Ovary (tissue), 10 donors: ENCODE measurements at regions of chr22 and their contacts with region 1.

Region 1: DNA sequence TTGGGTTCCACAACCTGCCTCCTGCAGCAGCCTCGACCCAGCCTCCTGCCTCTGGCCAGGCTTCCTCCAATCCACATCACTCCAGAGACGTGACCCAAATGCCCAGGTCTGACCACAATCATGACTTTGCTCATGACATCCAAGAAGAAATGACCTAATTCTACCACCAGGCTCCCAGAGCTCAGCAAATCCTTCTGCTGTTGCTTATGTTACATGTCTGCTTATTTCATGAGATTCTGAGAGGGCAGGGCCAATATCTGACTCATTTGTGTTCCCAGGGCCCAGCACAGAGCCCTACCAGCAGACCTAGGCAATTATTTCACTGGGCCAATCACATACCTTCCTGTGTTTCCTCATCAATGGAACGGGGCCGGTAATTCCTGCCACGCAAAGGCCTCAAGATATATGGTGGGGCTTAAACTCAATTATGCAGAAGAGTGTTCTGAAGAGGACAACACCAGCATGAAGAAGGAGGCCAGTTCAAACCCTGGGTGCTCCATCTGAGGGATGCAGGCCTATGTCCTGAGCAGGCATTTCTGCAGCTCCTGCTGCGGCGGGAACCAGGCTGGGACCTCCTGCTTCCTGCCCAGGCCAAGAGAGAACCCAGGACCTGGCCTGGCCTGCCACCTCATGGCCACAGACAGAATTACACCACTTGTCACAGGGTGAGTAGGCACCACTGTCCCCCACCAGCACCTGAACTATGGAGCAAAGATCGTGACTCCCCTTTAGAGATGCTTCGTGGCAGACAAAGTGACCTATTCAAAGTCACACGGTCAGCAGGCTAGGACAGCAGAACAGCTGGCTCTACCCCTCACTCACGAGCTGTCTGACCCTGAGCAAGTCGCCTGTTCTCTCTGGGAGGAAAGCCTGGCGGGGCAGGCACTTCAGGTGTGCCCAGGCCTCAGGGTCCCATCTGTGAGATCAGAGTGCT is 5.9 kb downstream of the CENPM start:
- DNase-seq: peak; percentile 78 to 89 (median 87)
- H3K4me3 ChIP-seq: no peak overlapping the region
- H3K27ac ChIP-seq: no peak overlapping the region
- H3K4me1 ChIP-seq: peaks cover 3% of the 10 kb centered on the region
- H3K27me3 ChIP-seq: no peaks in the 10 kb centered on the region
- CTCF ChIP-seq: peak; percentile 77 to 95 (median 92)
- EP300 ChIP-seq: no peak
- POLR2A ChIP-seq: no peak

Region 2: DNA sequence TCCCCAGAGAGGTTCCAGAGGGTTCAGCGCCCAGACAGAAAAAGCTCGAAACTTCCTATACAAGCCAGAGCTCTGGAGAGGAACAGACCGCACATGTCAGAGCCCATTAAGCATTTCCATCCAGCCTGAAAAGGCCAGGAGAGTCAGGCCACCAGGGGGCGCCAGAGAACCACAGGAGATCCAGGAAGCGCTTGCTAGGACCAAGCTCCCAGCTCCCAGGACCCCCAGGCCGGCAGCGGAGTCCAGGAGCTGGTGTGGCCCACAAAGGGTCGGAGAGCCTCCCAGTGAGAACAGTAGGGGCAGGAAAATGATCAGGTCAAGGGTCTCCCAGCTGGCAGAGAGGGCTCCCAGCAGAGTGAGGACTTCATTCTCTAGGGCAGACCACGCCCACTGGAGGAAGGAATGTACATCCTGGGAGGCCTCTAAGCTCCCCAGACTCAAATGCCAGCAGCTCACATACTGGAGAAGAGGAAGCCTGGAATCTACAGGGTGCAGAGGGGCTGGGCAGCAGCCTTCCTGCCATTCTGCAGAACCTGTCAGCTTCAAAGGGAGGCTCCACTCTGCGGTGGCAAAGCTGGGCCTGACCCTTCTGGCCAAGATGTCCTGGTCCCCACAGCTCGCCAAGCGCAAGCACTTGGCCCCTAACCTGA is 243.8 kb before region 1 on chr22:
- intact Hi-C with region 1: loop called (anchors 2 to 5 kb)
- DNase-seq: peak; percentile 87 to 96 (median 94)
- H3K4me3 ChIP-seq: peak overlapping the region; percentile 19
- H3K27ac ChIP-seq: no peak overlapping the region
- H3K4me1 ChIP-seq: peaks cover 7% of the 10 kb centered on the region
- H3K27me3 ChIP-seq: no peaks in the 10 kb centered on the region
- CTCF ChIP-seq: peak; percentile 88 to 98 (median 93)
- EP300 ChIP-seq: no peak
- POLR2A ChIP-seq: no peak

Region 3: GRCh38 chr22:41746567-41747400 is 194.3 kb before region 1 on chr22:
- intact Hi-C with region 1: loop called in 2 of 4 experiments (anchors 5 kb)
- DNase-seq: peak; percentile 57 to 75 (median 63)
- H3K4me3 ChIP-seq: no peak overlapping the region
- H3K27ac ChIP-seq: no peak overlapping the region
- H3K4me1 ChIP-seq: no peaks in the 10 kb centered on the region
- H3K27me3 ChIP-seq: no peaks in the 10 kb centered on the region
- CTCF ChIP-seq: peak in 2 of 3 donors; percentile 47 to 51
- EP300 ChIP-seq: no peak
- POLR2A ChIP-seq: no peak